Activated CD4-positive, alpha-beta T cell treated with anti-CD3 and anti-CD28 coated beads for 36 hours (primary cell): ENCODE measurements at regions of chr17 and their contacts with region 1.

Region 1: GRCh38 chr17:69235338-69235930 is 6.8 kb upstream of the ABCA10 start:
- DNase-seq: peak; percentile 83
- ATAC-seq: peak; percentile 80
- H3K4me3 Mint-ChIP-seq: no peak overlapping the region
- H3K27ac Mint-ChIP-seq: no peak overlapping the region
- H3K4me1 Mint-ChIP-seq: no peaks in the 10 kb centered on the region
- H3K27me3 Mint-ChIP-seq: no peaks in the 10 kb centered on the region

Region 2: DNA sequence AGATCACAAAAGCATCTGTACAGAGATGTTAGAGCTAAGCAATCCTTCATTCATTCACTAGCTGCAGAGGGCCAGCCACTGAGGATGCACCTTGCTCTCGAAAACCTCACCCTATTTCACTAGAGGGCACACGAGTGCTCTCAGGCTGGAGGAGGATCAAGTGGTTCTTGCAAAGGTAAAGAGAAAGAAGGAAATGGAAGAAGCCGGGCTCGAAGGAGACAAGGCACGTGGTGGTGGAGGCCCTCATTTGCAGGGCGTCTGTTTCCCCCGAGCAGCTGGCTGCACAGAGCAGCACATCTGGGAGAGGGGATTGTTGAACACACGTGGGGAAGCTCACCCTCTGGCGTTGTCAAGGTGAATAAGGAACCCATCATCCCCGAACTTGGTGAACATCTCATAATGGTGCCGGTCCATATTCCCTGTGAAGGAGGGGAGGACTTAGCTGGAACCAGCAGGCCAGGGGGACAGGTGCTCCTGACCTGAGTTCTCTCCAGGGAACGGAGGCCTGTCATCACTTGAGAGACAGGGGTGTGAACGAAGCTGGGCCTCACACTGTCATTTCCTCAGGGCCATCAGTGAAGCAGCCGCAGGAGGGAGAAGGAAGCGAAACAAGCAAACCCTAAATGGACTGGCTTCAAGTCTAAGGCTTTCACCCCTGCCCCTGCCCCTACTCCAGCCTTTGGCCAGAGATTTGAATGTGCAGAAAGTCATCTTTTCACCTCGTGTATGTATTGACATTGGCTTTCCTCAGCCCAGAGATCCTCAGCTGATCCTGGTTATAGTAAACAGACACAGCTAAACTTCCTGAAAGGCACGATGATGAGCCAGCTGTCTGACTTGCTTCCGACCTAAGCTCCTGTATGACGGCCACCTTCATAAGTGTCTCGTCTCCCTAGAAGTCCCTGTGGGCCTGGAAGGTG is 695.6 kb before region 1 on chr17:
- CTCF ChIA-PET with region 1: no interaction called
- POLR2A ChIA-PET with region 1: no interaction called
- intact Hi-C with region 1: loop called in 1 of 2 experiments (anchors 10 kb)
- DNase-seq: no peak
- ATAC-seq: no peak
- H3K4me3 Mint-ChIP-seq: no peak overlapping the region
- H3K27ac Mint-ChIP-seq: no peak overlapping the region
- H3K4me1 Mint-ChIP-seq: peaks cover 2% of the 10 kb centered on the region
- H3K27me3 Mint-ChIP-seq: no peaks in the 10 kb centered on the region

Region 3: DNA sequence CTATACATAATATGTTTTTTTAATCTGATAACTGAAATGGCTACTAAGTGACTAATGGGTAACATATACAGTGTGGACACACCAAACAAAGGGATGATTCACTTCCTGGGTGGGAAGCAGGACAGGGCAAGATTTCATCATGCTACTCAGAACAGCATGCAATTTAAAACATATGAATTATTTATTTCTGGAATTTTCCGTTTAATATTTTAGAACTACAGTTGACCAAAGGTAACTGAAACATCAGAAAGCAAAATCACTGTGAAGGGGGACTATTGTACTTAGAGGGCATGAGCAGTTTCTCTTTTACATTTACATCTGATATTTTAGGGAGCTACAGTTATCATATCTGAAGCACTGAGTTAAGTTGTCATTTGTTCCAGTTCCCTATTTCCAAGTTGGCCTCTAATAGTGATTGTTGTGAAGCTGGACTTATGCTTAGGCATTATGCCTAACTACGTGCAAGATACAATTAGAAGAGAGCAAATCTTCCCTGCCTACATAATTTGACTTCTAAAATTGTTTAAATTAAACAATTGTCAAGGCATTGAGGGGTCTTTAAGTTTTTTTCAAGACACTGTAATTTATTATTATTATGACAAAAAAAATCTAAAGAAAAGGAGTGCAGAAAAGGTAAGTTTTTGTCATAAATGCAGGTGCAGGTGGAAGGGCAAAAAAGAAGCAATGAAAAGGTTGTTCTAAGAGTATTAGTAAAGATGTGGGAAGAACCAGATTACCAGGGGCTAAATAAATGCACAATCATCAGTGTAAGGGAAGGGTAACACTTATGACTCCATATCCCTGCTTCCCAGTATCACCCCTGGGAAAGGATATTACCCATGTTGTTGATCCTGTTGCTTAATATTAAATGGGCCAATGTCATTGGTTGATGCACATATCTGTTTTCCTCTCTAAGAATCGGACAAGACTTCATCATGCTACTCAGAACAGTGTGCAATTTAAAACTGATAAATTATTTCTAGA is 59.3 kb before region 1 on chr17:
- CTCF ChIA-PET with region 1: no interaction called
- POLR2A ChIA-PET with region 1: interaction called, 12 read pairs
- intact Hi-C with region 1: no loop called
- DNase-seq: no peak
- ATAC-seq: no peak
- H3K4me3 Mint-ChIP-seq: no peak overlapping the region
- H3K27ac Mint-ChIP-seq: no peak overlapping the region
- H3K4me1 Mint-ChIP-seq: no peaks in the 10 kb centered on the region
- H3K27me3 Mint-ChIP-seq: no peaks in the 10 kb centered on the region